AG04449 (cell line): ENCODE measurements at regions of chr3 and their contacts with region 1.

Region 1: GRCh38 chr3:142987080-142987700 is 14.2 kb upstream of the U2SURP start:
- DNase-seq: no peak
- H3K4me3 ChIP-seq: no peak overlapping the region
- CTCF ChIP-seq: peak; percentile 43

Region 2: DNA sequence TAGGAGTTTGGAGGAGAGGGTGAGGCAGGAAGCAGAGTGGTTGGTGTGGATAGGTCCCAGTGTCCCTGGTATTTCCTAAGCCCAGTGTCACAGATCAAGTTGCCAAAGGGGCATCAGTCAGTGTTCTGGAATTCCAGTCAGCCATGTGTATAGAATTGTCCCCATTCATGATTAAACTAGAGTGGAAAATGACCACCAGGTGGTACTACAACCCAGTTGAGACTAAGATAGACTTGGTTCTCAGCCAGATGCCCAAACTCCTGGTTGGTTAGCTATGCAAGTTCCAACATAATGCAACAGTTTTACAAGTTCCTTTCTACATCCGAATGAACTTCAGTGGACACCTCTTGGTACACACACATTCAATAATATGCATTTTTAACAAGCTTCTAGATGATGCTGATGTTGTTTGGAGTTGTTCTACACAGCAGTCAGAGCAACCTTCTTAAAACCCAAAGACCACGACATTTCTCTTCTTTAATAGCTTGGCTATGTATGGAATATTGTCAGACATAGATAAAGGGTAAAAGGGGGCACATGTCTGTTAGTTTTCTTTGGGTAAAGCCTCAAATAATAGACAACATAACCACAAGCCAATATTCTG is 400.3 kb before region 1 on chr3:
- CTCF ChIA-PET with region 1: interaction called, 18 read pairs
- POLR2A ChIA-PET with region 1: no interaction called
- DNase-seq: no peak
- H3K4me3 ChIP-seq: no peak overlapping the region
- CTCF ChIP-seq: peak; percentile 50

Region 3: GRCh38 chr3:142929109-142929508 is 58.1 kb before region 1 on chr3:
- CTCF ChIA-PET with region 1: interaction called, 11 read pairs
- POLR2A ChIA-PET with region 1: no interaction called
- DNase-seq: no peak
- H3K4me3 ChIP-seq: no peak overlapping the region
- CTCF ChIP-seq: peak; percentile 46

Region 4: GRCh38 chr3:142976621-142977398 is 10.4 kb before region 1 on chr3:
- CTCF ChIA-PET with region 1: interaction called, 23 read pairs
- POLR2A ChIA-PET with region 1: interaction called, 3 read pairs
- DNase-seq: peak; percentile 75
- H3K4me3 ChIP-seq: no peak overlapping the region
- CTCF ChIP-seq: no peak

Region 5: GRCh38 chr3:143001369-143002082 is 14.3 kb after region 1 on chr3 and contains the start of gene U2SURP:
- CTCF ChIA-PET with region 1: interaction called, 12 read pairs
- POLR2A ChIA-PET with region 1: no interaction called
- DNase-seq: peak; percentile 93
- H3K4me3 ChIP-seq: peak within 1 kb of the TSS; percentile 91
- CTCF ChIP-seq: no peak